Right cardiac atrium (tissue), 5 donors: ENCODE measurements at regions of chr17 and their contacts with region 1.

Region 1: GRCh38 chr17:77131904-77132303 is 8.9 kb upstream of the SEC14L1 start:
- DNase-seq: no peak
- ATAC-seq: no peak
- H3K4me3 ChIP-seq: peak overlapping the region; percentile 8
- H3K27ac ChIP-seq: peak overlapping the region; percentile 54
- H3K4me1 ChIP-seq: peaks cover 5% of the 10 kb centered on the region
- H3K27me3 ChIP-seq: no peaks in the 10 kb centered on the region

Region 2: GRCh38 chr17:77086433-77087010 is 45.4 kb before region 1 on chr17:
- intact Hi-C with region 1: loop called in 1 of 4 experiments (anchors 5 kb)
- DNase-seq: peak; percentile 86 to 96 (median 93)
- ATAC-seq: peak; percentile 45 to 57
- H3K4me3 ChIP-seq: no peak overlapping the region
- H3K27ac ChIP-seq: no peak overlapping the region
- H3K4me1 ChIP-seq: peaks cover 3% of the 10 kb centered on the region
- H3K27me3 ChIP-seq: no peaks in the 10 kb centered on the region

Region 3: DNA sequence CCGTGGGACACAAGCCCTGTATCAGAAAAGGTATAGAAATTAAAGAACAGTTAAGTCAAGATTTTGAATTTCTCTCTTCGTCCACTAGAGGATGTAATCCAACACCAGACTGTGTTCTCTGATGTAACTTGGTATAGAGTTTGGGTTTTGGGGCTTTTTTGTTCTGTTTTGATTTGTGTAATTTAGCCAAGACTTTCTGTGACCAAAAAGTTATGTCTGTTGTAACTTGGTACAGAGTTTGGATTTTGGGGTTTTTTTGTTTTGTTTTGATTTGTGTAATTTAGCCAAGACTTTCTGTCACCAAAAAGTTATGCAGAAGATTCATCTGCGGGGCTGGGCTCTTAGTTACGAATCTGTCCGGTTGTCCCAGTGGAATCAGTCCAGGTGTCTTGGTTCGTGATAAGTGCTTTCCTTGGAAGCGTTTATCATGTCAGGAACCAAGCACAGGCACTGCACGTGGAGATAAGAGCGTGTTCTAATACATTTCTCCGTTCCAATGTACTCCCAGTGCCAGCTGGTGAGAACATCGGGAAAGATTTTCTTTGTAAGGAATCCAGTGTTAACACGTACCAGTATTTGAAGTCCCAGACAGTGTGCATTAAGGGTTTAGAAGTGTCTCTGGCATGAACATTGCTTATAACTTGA is 35.2 kb before region 1 on chr17:
- intact Hi-C with region 1: loop called in 2 of 4 experiments (anchors 5 kb)
- DNase-seq: peak in 2 of 3 donors; percentile 32 to 72
- ATAC-seq: peak; percentile 81 to 82
- H3K4me3 ChIP-seq: no peak overlapping the region
- H3K27ac ChIP-seq: peak overlapping the region; percentile 77
- H3K4me1 ChIP-seq: peaks cover 12% of the 10 kb centered on the region
- H3K27me3 ChIP-seq: no peaks in the 10 kb centered on the region

Region 4: GRCh38 chr17:77186141-77186604 is 54.3 kb after region 1 on chr17:
- intact Hi-C with region 1: no loop called
- DNase-seq: peak; percentile 48 to 69 (median 69)
- ATAC-seq: peak; percentile 69 to 73
- H3K4me3 ChIP-seq: no peak overlapping the region
- H3K27ac ChIP-seq: peak overlapping the region; percentile 32
- H3K4me1 ChIP-seq: peaks cover 16% of the 10 kb centered on the region
- H3K27me3 ChIP-seq: no peaks in the 10 kb centered on the region